Naive thymus-derived CD4-positive, alpha-beta T cell (primary cell): ENCODE measurements at regions of chr14 and their contacts with region 1.

Region 1: DNA sequence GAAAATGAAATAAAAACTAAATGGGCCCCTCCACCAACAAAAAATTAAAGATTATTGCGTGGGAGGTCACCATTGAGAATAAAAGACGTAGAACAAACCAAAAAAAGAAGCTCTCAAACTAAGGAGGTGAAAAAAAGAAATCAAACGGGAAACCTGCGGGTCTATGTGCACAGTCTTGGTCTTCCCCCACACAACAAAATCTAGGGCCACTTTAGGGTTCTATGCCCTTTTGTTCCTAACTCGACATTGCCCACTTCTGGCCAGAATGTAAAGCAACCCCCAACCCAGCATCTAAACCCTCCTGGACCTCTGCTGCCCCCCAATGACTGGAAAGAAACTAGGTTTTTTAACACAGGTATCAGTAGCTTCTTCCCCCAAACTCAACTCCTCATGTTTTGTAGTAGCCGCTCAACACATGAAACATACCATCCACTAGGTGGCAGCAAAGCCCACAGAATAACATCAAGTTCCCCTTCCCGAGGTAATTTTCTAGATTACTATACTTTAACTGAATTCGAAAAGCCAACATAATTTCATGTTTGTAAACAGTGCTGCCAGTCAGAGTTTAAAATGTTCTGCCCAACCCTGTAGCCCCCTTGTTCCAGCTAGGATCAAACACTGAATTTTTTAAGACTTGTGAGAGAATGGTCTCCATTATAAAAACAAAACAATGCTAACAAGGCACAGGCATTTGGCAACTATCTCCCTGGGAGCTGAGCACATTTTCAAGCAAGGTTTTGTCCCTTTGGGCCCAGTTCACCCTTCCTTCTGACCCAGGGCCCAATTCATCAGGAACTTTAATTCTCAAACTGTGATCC is 18.7 kb downstream of the DAD1 start:
- DNase-seq: peak in 8 of 9 donors; percentile 72 to 98 (median 96)
- ATAC-seq: peak; percentile 98
- H3K4me3 ChIP-seq: peak overlapping the region; percentile 53
- H3K4me3 Mint-ChIP-seq: peak overlapping the region; percentile 68 to 95 (median 80)
- H3K27ac ChIP-seq: peak overlapping the region; percentile 87
- H3K27ac Mint-ChIP-seq: peak overlapping the region; percentile 77 to 99 (median 96)
- H3K4me1 ChIP-seq: peaks cover 49 to 51% of the 10 kb centered on the region in 2 donors
- H3K4me1 Mint-ChIP-seq: peaks cover 28 to 72% (median 68%) of the 10 kb centered on the region in 7 donors
- H3K27me3 ChIP-seq: no peaks in the 10 kb centered on the region
- H3K27me3 Mint-ChIP-seq: no peaks in the 10 kb centered on the region

Region 2: GRCh38 chr14:21723431-21724045 is 846.8 kb before region 1 on chr14:
- CTCF ChIA-PET with region 1: interaction called, 12 read pairs
- POLR2A ChIA-PET with region 1: interaction called, 4 read pairs
- intact Hi-C with region 1: no loop called
- DNase-seq: peak in 5 of 9 donors; percentile 33 to 37 (median 36)
- ATAC-seq: peak; percentile 73
- H3K4me3 ChIP-seq: no peak overlapping the region
- H3K4me3 Mint-ChIP-seq: peak overlapping the region; percentile 33 to 94 (median 76)
- H3K27ac ChIP-seq: peak overlapping the region; percentile 33
- H3K27ac Mint-ChIP-seq: peak overlapping the region in 8 of 9 donors; percentile 15 to 80 (median 72)
- H3K4me1 ChIP-seq: no peaks in the 10 kb centered on the region
- H3K4me1 Mint-ChIP-seq: peaks cover 0 to 3% (median 0%) of the 10 kb centered on the region in 7 donors
- H3K27me3 ChIP-seq: no peaks in the 10 kb centered on the region
- H3K27me3 Mint-ChIP-seq: peaks cover 34 to 38% (median 36%) of the 10 kb centered on the region in 5 donors

Region 3: GRCh38 chr14:21917699-21918436 is 652.5 kb before region 1 on chr14:
- CTCF ChIA-PET with region 1: interaction called, 16 read pairs
- POLR2A ChIA-PET with region 1: interaction called, 8 read pairs
- intact Hi-C with region 1: loop called (anchors 1 kb)
- DNase-seq: peak in 7 of 9 donors; percentile 60 to 73 (median 64)
- ATAC-seq: peak; percentile 78
- H3K4me3 ChIP-seq: peak overlapping the region; percentile 49
- H3K4me3 Mint-ChIP-seq: peak overlapping the region; percentile 64 to 93 (median 84)
- H3K27ac ChIP-seq: peak overlapping the region; percentile 44
- H3K27ac Mint-ChIP-seq: peak overlapping the region; percentile 76 to 94 (median 85)
- H3K4me1 ChIP-seq: peaks cover 10 to 49% of the 10 kb centered on the region in 2 donors
- H3K4me1 Mint-ChIP-seq: peaks cover 12 to 83% (median 68%) of the 10 kb centered on the region in 7 donors
- H3K27me3 ChIP-seq: no peaks in the 10 kb centered on the region
- H3K27me3 Mint-ChIP-seq: no peaks in the 10 kb centered on the region

Region 4: GRCh38 chr14:22112004-22112403 is 458.3 kb before region 1 on chr14:
- CTCF ChIA-PET with region 1: no interaction called
- POLR2A ChIA-PET with region 1: no interaction called
- intact Hi-C with region 1: loop called in 1 of 2 experiments (anchors 2 kb)
- DNase-seq: peak in 6 of 9 donors; percentile 28 to 41 (median 36)
- ATAC-seq: peak; percentile 50
- H3K4me3 ChIP-seq: peak overlapping the region; percentile 27
- H3K4me3 Mint-ChIP-seq: peak overlapping the region; percentile 67 to 87 (median 79)
- H3K27ac ChIP-seq: no peak overlapping the region
- H3K27ac Mint-ChIP-seq: peak overlapping the region; percentile 65 to 89 (median 83)
- H3K4me1 ChIP-seq: no peaks in the 10 kb centered on the region
- H3K4me1 Mint-ChIP-seq: peaks cover 0 to 39% (median 10%) of the 10 kb centered on the region in 7 donors
- H3K27me3 ChIP-seq: no peaks in the 10 kb centered on the region
- H3K27me3 Mint-ChIP-seq: peaks cover 0 to 1% (median 0%) of the 10 kb centered on the region in 5 donors

Region 5: DNA sequence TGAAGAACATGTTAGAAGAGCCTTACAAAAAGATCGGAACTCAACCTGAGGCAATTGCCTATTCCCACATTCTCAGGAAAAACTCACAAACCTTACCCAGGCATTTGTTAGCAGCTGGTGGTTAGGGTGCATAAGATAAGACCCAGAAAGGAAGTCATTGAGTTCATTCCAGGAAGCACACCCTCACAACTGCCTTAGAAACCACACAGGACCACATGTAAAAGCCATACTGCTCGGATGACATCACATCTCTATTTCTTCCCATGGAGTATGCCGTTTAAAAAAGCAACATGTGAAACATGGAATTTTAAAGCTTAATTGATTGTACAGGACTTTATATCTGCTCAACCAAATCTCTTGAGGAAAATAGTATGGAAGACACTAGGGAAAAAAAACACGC is 392.5 kb before region 1 on chr14:
- CTCF ChIA-PET with region 1: no interaction called
- POLR2A ChIA-PET with region 1: no interaction called
- intact Hi-C with region 1: no loop called
- DNase-seq: peak in 4 of 9 donors; percentile 19 to 41 (median 24)
- ATAC-seq: peak; percentile 72
- H3K4me3 ChIP-seq: no peak overlapping the region
- H3K4me3 Mint-ChIP-seq: peak overlapping the region in 9 of 10 donors; percentile 16 to 79 (median 78)
- H3K27ac ChIP-seq: no peak overlapping the region
- H3K27ac Mint-ChIP-seq: peak overlapping the region in 8 of 9 donors; percentile 30 to 86 (median 76)
- H3K4me1 ChIP-seq: peaks cover 0 to 5% of the 10 kb centered on the region in 2 donors
- H3K4me1 Mint-ChIP-seq: peaks cover 0 to 28% (median 15%) of the 10 kb centered on the region in 7 donors
- H3K27me3 ChIP-seq: no peaks in the 10 kb centered on the region
- H3K27me3 Mint-ChIP-seq: peaks cover 0 to 4% (median 0%) of the 10 kb centered on the region in 5 donors

Region 6: GRCh38 chr14:22536853-22537338 is 33.4 kb before region 1 on chr14:
- CTCF ChIA-PET with region 1: interaction called, 13 read pairs
- POLR2A ChIA-PET with region 1: interaction called, 12 read pairs
- intact Hi-C with region 1: loop called in 1 of 2 experiments (anchors 1 kb)
- DNase-seq: peak in 2 of 9 donors; percentile 75 to 90
- ATAC-seq: peak; percentile 88
- H3K4me3 ChIP-seq: peak overlapping the region; percentile 46
- H3K4me3 Mint-ChIP-seq: peak overlapping the region; percentile 79 to 93 (median 87)
- H3K27ac ChIP-seq: peak overlapping the region; percentile 90
- H3K27ac Mint-ChIP-seq: peak overlapping the region; percentile 92 to 99 (median 94)
- H3K4me1 ChIP-seq: peaks cover 94 to 97% of the 10 kb centered on the region in 2 donors
- H3K4me1 Mint-ChIP-seq: peaks cover 61 to 100% (median 97%) of the 10 kb centered on the region in 7 donors
- H3K27me3 ChIP-seq: no peaks in the 10 kb centered on the region
- H3K27me3 Mint-ChIP-seq: no peaks in the 10 kb centered on the region

Region 7: DNA sequence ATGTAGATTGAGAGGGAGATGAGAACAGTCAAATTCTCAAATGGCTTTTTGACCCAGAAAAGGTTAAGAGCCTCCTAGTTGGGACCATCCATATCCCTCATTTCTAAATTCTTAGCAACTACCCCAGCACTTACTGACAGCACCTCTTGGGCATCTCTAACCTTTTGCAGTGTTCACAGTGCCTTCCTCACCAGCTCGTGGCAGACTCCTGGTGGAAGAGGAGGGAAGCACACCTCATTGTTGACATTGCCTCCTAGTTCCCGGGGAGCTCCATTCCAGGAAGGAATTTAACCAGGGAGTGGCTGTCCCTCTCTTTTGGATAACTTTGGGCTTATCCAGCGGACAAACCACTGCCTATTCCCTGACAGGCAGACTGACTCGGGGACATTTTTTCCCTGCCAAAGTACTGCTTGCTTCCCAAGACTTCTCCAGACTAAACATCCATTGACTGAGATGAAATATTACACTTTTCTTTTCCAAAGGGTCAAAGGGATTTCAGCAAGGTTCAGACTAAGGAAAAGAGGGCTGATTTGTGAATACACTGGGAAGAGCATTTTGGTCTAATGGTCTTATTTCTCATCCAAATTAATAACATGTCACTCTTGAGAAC is 82.8 kb after region 1 on chr14:
- CTCF ChIA-PET with region 1: interaction called, 32 read pairs
- POLR2A ChIA-PET with region 1: interaction called, 5 read pairs
- intact Hi-C with region 1: loop called (anchors 1 kb)
- DNase-seq: peak; percentile 17 to 54 (median 42)
- ATAC-seq: peak; percentile 87
- H3K4me3 ChIP-seq: no peak overlapping the region
- H3K4me3 Mint-ChIP-seq: no peak overlapping the region
- H3K27ac ChIP-seq: no peak overlapping the region
- H3K27ac Mint-ChIP-seq: no peak overlapping the region
- H3K4me1 ChIP-seq: no peaks in the 10 kb centered on the region
- H3K4me1 Mint-ChIP-seq: peaks cover 0 to 3% (median 0%) of the 10 kb centered on the region in 7 donors
- H3K27me3 ChIP-seq: no peaks in the 10 kb centered on the region
- H3K27me3 Mint-ChIP-seq: no peaks in the 10 kb centered on the region

Region 8: GRCh38 chr14:22918804-22919600 is 348.7 kb after region 1 on chr14 and contains the start of gene RBM23:
- CTCF ChIA-PET with region 1: interaction called, 6 read pairs
- POLR2A ChIA-PET with region 1: interaction called, 3 read pairs
- intact Hi-C with region 1: loop called in 1 of 2 experiments (anchors 1 kb)
- DNase-seq: peak; percentile 98 to 100 (median 100)
- ATAC-seq: peak; percentile 92
- H3K4me3 ChIP-seq: peak within 1 kb of the TSS; percentile 96
- H3K4me3 Mint-ChIP-seq: peak within 1 kb of the TSS; percentile 93 to 100 (median 97)
- H3K27ac ChIP-seq: peak within 1 kb of the TSS; percentile 98
- H3K27ac Mint-ChIP-seq: peak within 1 kb of the TSS; percentile 100
- H3K4me1 ChIP-seq: peaks cover 0 to 19% of the 10 kb centered on the region in 2 donors
- H3K4me1 Mint-ChIP-seq: peaks cover 18 to 56% (median 49%) of the 10 kb centered on the region in 7 donors
- H3K27me3 ChIP-seq: no peaks in the 10 kb centered on the region
- H3K27me3 Mint-ChIP-seq: peaks cover 0 to 4% (median 0%) of the 10 kb centered on the region in 5 donors
- total RNA-seq, gene RBM23: 91.9 to 140 (median 99.1) TPM